CD14-positive monocyte (primary cell): ENCODE measurements at regions of chr10 and their contacts with region 1.

Region 1: GRCh38 chr10:32065856-32066255 is 9.6 kb upstream of the KIF5B start:
- DNase-seq: peak; percentile 64 to 83 (median 81)
- H3K4me3 ChIP-seq: no peak overlapping the region
- H3K4me3 Mint-ChIP-seq: peak overlapping the region in 1 of 2 donors; percentile 35
- H3K27ac ChIP-seq: peak overlapping the region in 1 of 2 donors; percentile 4
- H3K27ac Mint-ChIP-seq: peak overlapping the region in 6 of 7 donors; percentile 1 to 86 (median 46)
- H3K4me1 ChIP-seq: peaks cover 13 to 15% of the 10 kb centered on the region in 2 donors
- H3K4me1 Mint-ChIP-seq: peaks cover 11% of the 10 kb centered on the region
- H3K27me3 ChIP-seq: no peaks in the 10 kb centered on the region
- H3K27me3 Mint-ChIP-seq: no peaks in the 10 kb centered on the region
- CTCF ChIP-seq: no peak

Region 2: GRCh38 chr10:31952066-31952465 is 113.8 kb before region 1 on chr10:
- intact Hi-C with region 1: no loop called
- DNase-seq: no peak
- H3K4me3 ChIP-seq: no peak overlapping the region
- H3K4me3 Mint-ChIP-seq: peak overlapping the region in 1 of 2 donors; percentile 58
- H3K27ac ChIP-seq: no peak overlapping the region
- H3K27ac Mint-ChIP-seq: peak overlapping the region in 2 of 7 donors; percentile 33 to 78
- H3K4me1 ChIP-seq: peaks cover 44 to 53% of the 10 kb centered on the region in 2 donors
- H3K4me1 Mint-ChIP-seq: peaks cover 55% of the 10 kb centered on the region
- H3K27me3 ChIP-seq: no peaks in the 10 kb centered on the region
- H3K27me3 Mint-ChIP-seq: no peaks in the 10 kb centered on the region
- CTCF ChIP-seq: no peak

Region 3: GRCh38 chr10:32190890-32191491 is 125.1 kb after region 1 on chr10:
- intact Hi-C with region 1: loop called in 1 of 2 experiments (anchors 10 kb)
- DNase-seq: peak; percentile 31 to 61 (median 35)
- H3K4me3 ChIP-seq: no peak overlapping the region
- H3K4me3 Mint-ChIP-seq: no peak overlapping the region
- H3K27ac ChIP-seq: no peak overlapping the region
- H3K27ac Mint-ChIP-seq: peak overlapping the region in 2 of 7 donors; percentile 30 to 72
- H3K4me1 ChIP-seq: peaks cover under 1 to 17% of the 10 kb centered on the region in 2 donors
- H3K4me1 Mint-ChIP-seq: peaks cover 15% of the 10 kb centered on the region
- H3K27me3 ChIP-seq: no peaks in the 10 kb centered on the region
- H3K27me3 Mint-ChIP-seq: peaks cover 0 to 4% (median 0%) of the 10 kb centered on the region in 3 donors
- CTCF ChIP-seq: peak; percentile 78